Activated T-helper 2 cell treated with anti-CD3 and anti-CD28 coated beads, Interferon-gamma antibody, Interleukin-2, Interleukin-4, amounts not matched to agents 10 μg/mL and 5 μg/mL and 100 μg/mL, durations not matched to agents 14 hours and 24 hours and 36 hours (primary cell): ENCODE measurements at regions of chr3 and their contacts with region 1.

Region 1: GRCh38 chr3:159884661-159885402 is 103.8 kb upstream of the IL12A start:
- DNase-seq: no peak
- H3K4me3 Mint-ChIP-seq: no peak overlapping the region
- H3K27ac Mint-ChIP-seq: no peak overlapping the region
- H3K4me1 Mint-ChIP-seq: no peaks in the 10 kb centered on the region
- H3K27me3 Mint-ChIP-seq: peaks cover 27% of the 10 kb centered on the region

Region 2: DNA sequence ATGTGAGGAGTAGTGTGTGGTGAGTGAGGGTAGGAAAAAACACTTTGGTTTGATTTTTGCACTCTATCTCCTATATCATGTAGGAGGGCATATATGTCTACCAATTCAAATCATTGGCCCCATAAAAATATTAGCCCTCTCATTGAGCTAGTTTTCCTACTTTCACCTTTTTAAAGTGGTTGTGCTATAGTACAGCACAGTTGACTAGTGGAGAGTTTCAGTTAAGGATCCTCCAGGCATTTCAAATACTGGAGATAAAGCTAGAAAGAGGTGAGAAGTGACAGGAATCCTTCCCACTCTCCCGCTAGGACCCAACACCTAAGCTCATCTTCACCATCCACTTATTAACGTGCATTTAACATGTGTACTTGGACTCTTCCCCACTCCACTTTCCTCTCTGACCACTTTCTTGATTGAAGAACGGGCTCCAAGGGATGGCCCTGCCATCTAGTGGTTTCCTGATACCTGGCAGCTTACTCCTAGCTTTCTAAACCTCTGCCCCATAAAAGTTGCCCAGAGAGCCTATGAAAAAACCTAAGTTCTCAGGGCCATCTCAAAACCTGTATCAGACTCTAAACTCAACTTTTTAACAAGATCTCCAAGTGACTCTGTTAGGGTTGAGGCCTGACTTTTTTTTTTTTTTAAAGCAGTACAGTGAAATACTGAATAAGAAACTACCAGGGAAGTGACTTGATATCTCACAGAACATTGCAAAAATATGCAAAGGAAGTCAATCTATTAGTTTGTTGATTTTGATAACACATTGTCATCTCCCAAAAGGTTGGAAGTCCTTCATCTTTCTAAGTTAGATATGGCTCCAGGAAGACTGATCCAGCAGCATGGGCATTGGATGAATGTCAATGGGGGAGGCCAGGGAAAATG is 121.7 kb after region 1 on chr3:
- intact Hi-C with region 1: loop called (anchors 1 kb)
- DNase-seq: no peak
- H3K4me3 Mint-ChIP-seq: no peak overlapping the region
- H3K27ac Mint-ChIP-seq: peak overlapping the region; percentile 46
- H3K4me1 Mint-ChIP-seq: peaks cover 49% of the 10 kb centered on the region
- H3K27me3 Mint-ChIP-seq: no peaks in the 10 kb centered on the region

Region 3: DNA sequence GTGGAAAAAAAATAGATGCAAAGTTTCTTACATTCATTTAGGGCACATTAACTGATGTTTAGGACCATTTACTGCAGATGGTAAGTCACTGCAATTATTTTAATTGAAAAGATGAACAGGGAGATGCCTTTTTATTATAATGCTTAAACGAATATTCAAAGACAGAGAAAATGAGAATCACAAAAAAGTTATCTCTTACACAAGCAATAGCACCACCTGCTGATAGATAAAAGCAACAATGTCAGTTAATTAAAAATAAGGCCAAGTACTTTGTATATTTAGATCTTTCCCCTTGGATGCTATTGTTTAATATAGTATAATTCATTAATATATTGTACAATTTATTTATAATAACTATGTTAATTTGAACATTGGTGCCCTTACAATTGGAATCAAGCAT is 458.3 kb after region 1 on chr3:
- intact Hi-C with region 1: loop called (anchors 5 kb)
- DNase-seq: no peak
- H3K4me3 Mint-ChIP-seq: no peak overlapping the region
- H3K27ac Mint-ChIP-seq: no peak overlapping the region
- H3K4me1 Mint-ChIP-seq: no peaks in the 10 kb centered on the region
- H3K27me3 Mint-ChIP-seq: no peaks in the 10 kb centered on the region